Prostate gland (tissue), 2 donors: ENCODE measurements at regions of chr20 and their contacts with region 1.

Region 1: DNA sequence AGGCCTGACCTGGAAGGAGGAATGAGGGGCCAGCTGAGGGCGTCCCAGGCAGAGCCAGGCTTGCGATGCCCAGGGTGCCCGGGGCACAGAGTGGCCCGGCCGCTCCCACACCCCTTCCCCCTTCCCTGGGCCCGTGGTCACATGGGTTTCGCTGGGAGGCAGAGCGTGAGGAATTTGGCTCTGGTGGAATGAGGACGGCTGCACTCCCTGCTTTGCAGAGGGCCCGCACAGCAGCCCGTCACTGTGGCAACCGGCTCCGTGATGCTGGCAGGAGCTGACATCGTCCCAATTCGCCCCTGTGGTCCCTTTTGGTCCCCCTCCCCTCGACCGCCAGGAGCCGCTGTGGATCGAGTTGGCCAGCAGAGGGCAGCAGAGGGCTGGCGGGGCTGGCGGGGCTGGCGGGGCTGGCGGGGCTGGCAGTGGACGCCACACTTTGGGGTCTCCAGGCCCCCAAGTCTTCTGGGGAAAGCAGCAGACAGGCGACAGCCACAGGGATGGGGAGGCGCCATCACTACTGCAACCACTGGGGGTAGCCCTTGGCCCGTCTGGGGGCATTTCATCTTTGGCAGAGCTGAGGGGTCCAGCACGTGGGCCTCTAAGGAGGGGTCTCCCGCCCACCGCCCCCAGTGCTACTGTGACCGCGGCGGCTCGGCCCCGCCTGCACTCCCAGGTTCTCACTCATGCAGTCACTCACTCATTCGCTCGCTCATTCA is 49.6 kb upstream of the BHLHE23 start:
- DNase-seq: no peak
- H3K4me3 ChIP-seq: no peak overlapping the region
- H3K27ac ChIP-seq: no peak overlapping the region
- H3K4me1 ChIP-seq: peaks cover 2% of the 10 kb centered on the region
- H3K27me3 ChIP-seq: peaks cover 7% of the 10 kb centered on the region
- CTCF ChIP-seq: peak; percentile 65 to 83 (median 76)
- POLR2A ChIP-seq: no peak

Region 2: DNA sequence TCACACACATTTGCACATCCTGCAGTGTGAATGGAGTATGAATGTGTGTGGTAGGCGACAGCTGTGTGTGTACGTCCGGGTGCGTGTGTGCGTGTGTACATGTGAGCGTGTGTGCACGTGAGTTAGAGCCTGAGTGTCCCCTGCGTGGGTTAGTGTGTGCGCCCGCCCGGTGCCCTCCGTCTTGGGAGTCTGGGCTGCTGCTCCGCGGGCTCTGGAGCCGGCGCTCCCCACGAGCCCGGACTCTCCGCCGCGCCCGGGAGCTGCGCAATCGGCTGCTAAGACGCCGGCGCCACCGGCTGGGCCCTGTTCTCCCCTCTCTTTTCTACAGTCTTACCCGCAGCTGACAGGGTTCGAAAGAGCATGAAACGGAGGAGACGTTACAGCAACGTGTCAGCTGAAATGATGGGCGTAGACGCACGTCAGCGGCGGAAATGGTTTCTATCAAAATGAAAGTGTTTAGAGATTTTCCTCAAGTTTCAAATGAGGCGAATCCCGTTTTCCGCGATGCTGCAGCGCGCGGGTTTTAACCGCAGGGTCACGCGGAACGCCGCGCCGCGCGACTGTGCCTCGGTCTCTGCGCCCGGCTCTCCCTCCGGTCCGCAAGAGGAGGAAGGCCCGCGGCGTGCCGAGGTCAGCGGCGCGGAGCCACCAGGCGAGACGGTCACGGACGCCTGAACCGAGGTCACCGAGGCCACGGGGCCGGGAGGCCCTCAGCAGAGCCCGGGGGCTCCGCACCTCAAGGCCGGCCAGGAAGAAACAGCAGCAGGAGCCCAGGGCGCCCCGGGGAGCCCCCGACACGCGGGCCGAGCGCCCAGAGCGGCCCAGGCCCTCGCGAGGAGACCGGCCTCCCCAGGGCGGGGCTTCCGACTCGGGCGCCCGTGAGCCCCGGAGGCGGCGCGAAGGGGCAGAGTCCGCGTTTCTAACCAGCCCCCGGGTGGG is 45.7 kb after region 1 on chr20:
- intact Hi-C with region 1: no loop called
- DNase-seq: no peak
- H3K4me3 ChIP-seq: peak overlapping the region; percentile 42 to 49
- H3K27ac ChIP-seq: no peak overlapping the region
- H3K4me1 ChIP-seq: no peaks in the 10 kb centered on the region
- H3K27me3 ChIP-seq: peaks cover 13% of the 10 kb centered on the region
- CTCF ChIP-seq: no peak
- POLR2A ChIP-seq: no peak

Region 3: DNA sequence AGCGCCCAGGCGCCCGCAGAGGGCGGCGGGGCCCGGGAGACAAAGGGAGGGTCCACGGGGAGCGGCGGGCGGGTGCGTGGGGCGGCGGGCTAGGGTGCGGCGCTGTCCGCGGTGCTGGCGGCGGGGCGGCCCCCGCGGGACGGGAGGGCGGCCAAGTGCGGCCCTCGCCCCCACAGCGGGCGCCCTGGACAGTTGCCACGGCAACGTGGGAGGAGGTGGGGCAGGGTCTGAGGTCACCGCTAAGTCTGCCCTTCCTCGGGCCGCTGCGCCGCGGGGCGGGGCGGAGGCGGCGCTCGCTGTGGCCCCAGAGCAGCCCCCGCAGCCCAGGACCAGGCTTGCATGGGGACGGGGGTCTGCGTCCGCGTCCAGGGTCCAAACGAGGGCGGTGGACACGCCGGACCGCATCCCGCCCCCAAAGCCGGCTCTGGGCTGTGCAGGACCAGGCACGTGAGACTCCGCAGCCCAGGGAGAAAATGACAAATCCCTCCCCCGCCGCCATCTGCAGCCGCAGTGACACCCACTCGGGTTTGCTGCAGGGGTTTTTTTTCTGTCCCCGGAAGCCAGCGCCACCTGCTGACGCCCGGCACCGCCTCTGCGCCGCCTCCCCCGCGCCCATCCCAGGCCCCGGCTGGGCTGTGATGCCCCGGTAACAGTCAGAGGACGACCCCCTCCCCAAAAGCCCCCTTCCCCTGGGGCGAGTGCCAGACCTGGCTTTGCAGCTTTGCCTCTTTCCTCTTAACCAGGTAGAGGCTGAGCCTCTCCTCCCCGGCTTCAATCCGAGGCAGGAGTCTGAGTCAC is 122.7 kb after region 1 on chr20:
- intact Hi-C with region 1: loop called (anchors 5 kb)
- DNase-seq: no peak
- H3K4me3 ChIP-seq: peak overlapping the region in 1 of 2 donors; percentile 17
- H3K27ac ChIP-seq: no peak overlapping the region
- H3K4me1 ChIP-seq: peaks cover 8% of the 10 kb centered on the region
- H3K27me3 ChIP-seq: peaks cover 71% of the 10 kb centered on the region
- CTCF ChIP-seq: peak; percentile 10 to 47 (median 41)
- POLR2A ChIP-seq: no peak

Region 4: GRCh38 chr20:63224412-63225081 is 168.2 kb after region 1 on chr20:
- intact Hi-C with region 1: loop called (anchors 5 kb)
- DNase-seq: peak; percentile 32
- H3K4me3 ChIP-seq: no peak overlapping the region
- H3K27ac ChIP-seq: no peak overlapping the region
- H3K4me1 ChIP-seq: no peaks in the 10 kb centered on the region
- H3K27me3 ChIP-seq: peaks cover 3% of the 10 kb centered on the region
- CTCF ChIP-seq: no peak
- POLR2A ChIP-seq: no peak

Region 5: GRCh38 chr20:63261060-63261794 is 204.8 kb after region 1 on chr20:
- intact Hi-C with region 1: no loop called
- DNase-seq: no peak
- H3K4me3 ChIP-seq: no peak overlapping the region
- H3K27ac ChIP-seq: no peak overlapping the region
- H3K4me1 ChIP-seq: no peaks in the 10 kb centered on the region
- H3K27me3 ChIP-seq: peaks cover 3% of the 10 kb centered on the region
- CTCF ChIP-seq: no peak
- POLR2A ChIP-seq: no peak